Body of pancreas (tissue), 4 donors: ENCODE measurements at regions of chr11 and their contacts with region 1.

Region 1: GRCh38 chr11:11787305-11788062 is 54.3 kb upstream of the USP47 start:
- DNase-seq: peak; percentile 75 to 78 (median 77)
- ATAC-seq: peak; percentile 75
- H3K4me3 ChIP-seq: no peak overlapping the region
- H3K27ac ChIP-seq: no peak overlapping the region
- H3K4me1 ChIP-seq: no peaks in the 10 kb centered on the region
- H3K27me3 ChIP-seq: no peaks in the 10 kb centered on the region
- CTCF ChIP-seq: peak; percentile 75 to 93 (median 89)
- POLR2A ChIP-seq: no peak

Region 2: GRCh38 chr11:11036848-11037732 is 750.4 kb before region 1 on chr11:
- intact Hi-C with region 1: loop called (anchors 5 kb)
- DNase-seq: peak; percentile 46 to 80 (median 59)
- ATAC-seq: peak; percentile 85
- H3K4me3 ChIP-seq: no peak overlapping the region
- H3K27ac ChIP-seq: no peak overlapping the region
- H3K4me1 ChIP-seq: no peaks in the 10 kb centered on the region
- H3K27me3 ChIP-seq: no peaks in the 10 kb centered on the region
- CTCF ChIP-seq: peak; percentile 57 to 79 (median 72)
- POLR2A ChIP-seq: no peak

Region 3: DNA sequence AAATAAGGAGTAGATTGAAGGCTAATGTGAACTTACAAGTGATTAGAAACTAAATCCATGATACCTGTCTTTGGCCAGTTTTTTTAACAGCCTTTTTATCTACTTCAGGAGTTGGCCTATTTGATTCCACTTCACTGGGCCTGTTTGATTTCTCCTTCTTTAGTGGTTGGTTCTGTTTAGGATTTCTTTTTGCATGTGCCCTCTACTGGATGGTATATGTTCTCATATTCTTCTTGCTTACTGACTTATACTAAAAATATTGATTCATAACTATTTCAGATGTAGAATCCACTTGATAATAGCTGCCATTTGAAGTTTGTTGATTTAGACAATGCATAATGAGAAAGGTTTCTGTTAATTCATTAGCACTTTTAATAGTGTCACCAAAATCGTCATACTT is 108.2 kb after region 1 on chr11:
- intact Hi-C with region 1: no loop called
- DNase-seq: no peak
- ATAC-seq: no peak
- H3K4me3 ChIP-seq: no peak overlapping the region
- H3K27ac ChIP-seq: no peak overlapping the region
- H3K4me1 ChIP-seq: no peaks in the 10 kb centered on the region
- H3K27me3 ChIP-seq: no peaks in the 10 kb centered on the region
- CTCF ChIP-seq: peak in 4 of 7 experiments; percentile 24 to 40 (median 27)
- POLR2A ChIP-seq: no peak